Activated CD4-positive, alpha-beta memory T cell treated with anti-CD3 and anti-CD28 coated beads for 36 hours (primary cell): ENCODE measurements at regions of chr18 and their contacts with region 1.

Region 1: GRCh38 chr18:12408247-12408869 is 629 bp downstream of the PRELID3A start:
- DNase-seq: no peak
- H3K4me3 Mint-ChIP-seq: peak overlapping the region; percentile 63
- H3K27ac Mint-ChIP-seq: no peak overlapping the region
- H3K4me1 Mint-ChIP-seq: peaks cover 25% of the 10 kb centered on the region
- H3K27me3 Mint-ChIP-seq: peaks cover 26% of the 10 kb centered on the region

Region 2: DNA sequence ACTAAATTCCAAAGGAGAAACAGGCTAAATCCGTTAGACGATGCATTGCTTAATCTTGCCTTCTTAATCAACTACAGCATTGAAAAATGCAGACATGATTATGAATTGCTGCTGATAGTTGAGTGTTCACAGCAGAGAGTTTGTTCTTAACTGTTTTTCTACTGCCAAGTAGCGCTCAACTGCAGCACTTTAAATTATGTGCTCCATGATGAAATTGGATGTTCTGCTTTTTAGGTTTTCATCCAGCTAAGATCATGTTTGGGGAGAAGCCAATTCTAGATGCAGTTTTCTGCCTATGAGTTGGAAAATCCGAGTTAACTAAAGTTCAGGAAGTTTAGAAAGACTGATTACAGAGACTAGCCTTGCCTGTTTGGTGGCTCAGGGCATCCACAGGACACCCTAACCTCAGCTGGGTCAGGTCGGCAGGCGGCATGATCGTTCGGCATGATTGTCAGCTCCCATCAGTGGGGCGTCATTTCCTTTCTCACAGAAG is 1139.6 kb before region 1 on chr18:
- CTCF ChIA-PET with region 1: no interaction called
- POLR2A ChIA-PET with region 1: no interaction called
- intact Hi-C with region 1: no loop called
- DNase-seq: no peak
- H3K4me3 Mint-ChIP-seq: no peak overlapping the region
- H3K27ac Mint-ChIP-seq: no peak overlapping the region
- H3K4me1 Mint-ChIP-seq: no peaks in the 10 kb centered on the region
- H3K27me3 Mint-ChIP-seq: peaks cover 7% of the 10 kb centered on the region

Region 3: DNA sequence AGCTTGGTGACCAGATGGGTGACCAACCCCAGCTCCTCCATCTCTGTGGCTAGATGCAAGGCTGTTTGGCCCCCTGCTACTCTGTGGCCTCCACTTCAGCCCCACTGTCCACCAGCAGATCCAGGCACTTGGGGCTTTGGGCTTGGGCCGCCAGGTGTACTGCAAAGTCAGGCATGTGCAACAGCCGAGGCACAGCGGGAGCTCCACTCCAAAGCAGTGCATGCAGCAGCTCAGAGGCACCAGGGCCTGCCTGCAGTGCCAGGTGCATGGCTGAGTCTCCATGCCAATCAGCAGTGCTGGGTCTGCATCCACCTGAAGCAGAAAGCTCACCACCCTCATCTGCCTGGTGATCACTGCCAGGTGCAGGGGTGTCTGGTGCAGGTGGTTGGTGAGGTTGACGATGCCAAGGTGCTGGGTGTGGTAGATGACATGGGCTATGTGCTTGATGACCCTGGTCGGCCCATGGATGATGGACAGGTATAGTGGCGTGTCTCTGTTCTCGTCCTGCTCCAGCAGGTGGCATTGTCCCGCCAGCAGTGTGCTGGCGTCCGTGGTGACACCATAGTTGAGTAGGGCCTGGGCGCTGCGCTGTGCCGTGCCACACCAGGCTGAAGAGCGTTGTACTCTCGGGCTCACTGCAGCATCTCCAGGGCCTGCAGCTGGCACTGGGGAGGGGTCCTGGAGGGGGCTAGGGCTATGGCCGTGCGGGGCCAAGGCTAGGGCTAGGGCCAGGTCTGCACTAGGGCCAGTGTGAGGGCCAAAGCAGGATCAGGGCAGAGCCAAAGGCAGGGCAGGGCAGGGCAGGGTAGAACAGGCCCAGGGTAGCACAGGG is 315.7 kb before region 1 on chr18:
- CTCF ChIA-PET with region 1: no interaction called
- POLR2A ChIA-PET with region 1: no interaction called
- intact Hi-C with region 1: no loop called
- DNase-seq: no peak
- H3K4me3 Mint-ChIP-seq: no peak overlapping the region
- H3K27ac Mint-ChIP-seq: no peak overlapping the region
- H3K4me1 Mint-ChIP-seq: no peaks in the 10 kb centered on the region
- H3K27me3 Mint-ChIP-seq: peaks cover 4% of the 10 kb centered on the region

Region 4: GRCh38 chr18:12420831-12421421 is 12.6 kb after region 1 on chr18:
- CTCF ChIA-PET with region 1: no interaction called
- POLR2A ChIA-PET with region 1: interaction called, 7 read pairs
- intact Hi-C with region 1: loop called (anchors 2 kb)
- DNase-seq: no peak
- H3K4me3 Mint-ChIP-seq: peak overlapping the region; percentile 51
- H3K27ac Mint-ChIP-seq: no peak overlapping the region
- H3K4me1 Mint-ChIP-seq: peaks cover 7% of the 10 kb centered on the region
- H3K27me3 Mint-ChIP-seq: peaks cover 4% of the 10 kb centered on the region

Region 5: GRCh38 chr18:12485479-12486105 is 77.2 kb after region 1 on chr18:
- CTCF ChIA-PET with region 1: no interaction called
- POLR2A ChIA-PET with region 1: no interaction called
- intact Hi-C with region 1: no loop called
- DNase-seq: no peak
- H3K4me3 Mint-ChIP-seq: no peak overlapping the region
- H3K27ac Mint-ChIP-seq: no peak overlapping the region
- H3K4me1 Mint-ChIP-seq: peaks cover 2% of the 10 kb centered on the region
- H3K27me3 Mint-ChIP-seq: no peaks in the 10 kb centered on the region